Posterior vena cava (tissue), 2 donors: ENCODE measurements at regions of chrX and their contacts with region 1.

Region 1: DNA sequence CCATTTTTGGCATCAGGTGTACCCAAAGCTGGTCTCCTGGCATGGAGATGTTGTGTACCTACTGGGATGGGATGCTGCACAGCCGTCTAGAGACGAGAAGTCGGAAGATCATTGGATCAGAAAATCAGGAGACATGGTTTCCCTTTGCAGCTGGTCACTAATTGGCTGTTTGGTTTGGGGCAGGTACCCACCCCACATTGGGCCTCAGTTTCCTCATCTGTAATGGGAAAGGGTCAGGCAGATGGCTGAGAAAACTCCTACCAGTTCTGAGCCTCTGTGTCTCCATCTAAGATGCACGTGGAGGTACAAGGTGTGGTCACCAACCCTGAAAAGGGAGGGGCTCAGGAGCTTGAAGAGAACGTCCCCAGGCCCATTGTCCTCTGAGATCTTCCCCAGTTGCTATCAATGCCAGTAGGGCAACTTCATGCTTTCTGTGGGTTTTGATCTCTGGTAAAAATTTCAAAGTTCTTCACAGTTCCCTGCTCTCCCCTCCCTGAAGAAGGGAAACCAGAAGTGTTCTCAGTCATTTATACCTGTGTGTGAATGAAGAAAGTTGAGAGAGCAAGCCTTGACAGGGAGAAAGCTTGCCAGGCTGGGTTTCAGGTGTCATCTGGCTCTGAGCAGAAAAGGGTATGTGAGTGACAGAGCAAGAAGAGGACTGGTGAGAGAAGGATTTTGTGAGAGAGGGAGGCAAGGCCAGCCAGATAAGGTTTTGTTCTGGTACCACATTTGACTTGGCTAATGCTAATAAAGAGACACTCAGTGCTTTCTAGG is 15.1 kb downstream of the TSC22D3 start:
- DNase-seq: no peak

Region 2: GRCh38 chrX:106341823-106342222 is 1418.7 kb before region 1 on chrX:
- intact Hi-C with region 1: no loop called
- DNase-seq: no peak

Region 3: DNA sequence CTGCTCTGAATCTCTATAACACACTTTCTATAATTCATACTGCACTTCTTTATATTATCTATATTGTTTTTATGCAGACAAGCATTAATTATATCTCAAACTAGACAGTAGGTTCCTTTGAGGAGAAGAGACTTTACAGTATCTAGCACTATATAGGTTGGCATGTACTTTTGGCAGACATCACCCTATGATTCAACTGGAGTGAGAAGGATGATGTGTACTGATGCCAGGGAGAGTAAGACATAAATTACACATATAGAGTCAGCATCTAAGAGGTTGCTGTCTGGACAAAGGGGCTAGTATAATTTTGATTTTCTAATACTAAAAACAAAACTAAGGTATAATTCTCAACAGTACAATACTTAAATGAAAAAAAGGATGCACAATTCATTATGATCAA is 636.7 kb before region 1 on chrX:
- intact Hi-C with region 1: loop called in 1 of 2 experiments (anchors 5 kb)
- DNase-seq: no peak

Region 4: GRCh38 chrX:109281483-109282275 is 1521.2 kb after region 1 on chrX:
- intact Hi-C with region 1: loop called in 1 of 2 experiments (anchors 5 kb)
- DNase-seq: no peak

Region 5: GRCh38 chrX:109360291-109360690 is 1599.8 kb after region 1 on chrX:
- intact Hi-C with region 1: no loop called
- DNase-seq: no peak